Posterior vena cava (tissue), 2 donors: ENCODE measurements at regions of chr12 and their contacts with region 1.

Region 1: GRCh38 chr12:67710582-67710981 is 62.0 kb downstream of the DYRK2 start:
- DNase-seq: no peak

Region 2: GRCh38 chr12:66636771-66637170 is 1073.8 kb before region 1 on chr12:
- intact Hi-C with region 1: no loop called
- DNase-seq: peak; percentile 81

Region 3: DNA sequence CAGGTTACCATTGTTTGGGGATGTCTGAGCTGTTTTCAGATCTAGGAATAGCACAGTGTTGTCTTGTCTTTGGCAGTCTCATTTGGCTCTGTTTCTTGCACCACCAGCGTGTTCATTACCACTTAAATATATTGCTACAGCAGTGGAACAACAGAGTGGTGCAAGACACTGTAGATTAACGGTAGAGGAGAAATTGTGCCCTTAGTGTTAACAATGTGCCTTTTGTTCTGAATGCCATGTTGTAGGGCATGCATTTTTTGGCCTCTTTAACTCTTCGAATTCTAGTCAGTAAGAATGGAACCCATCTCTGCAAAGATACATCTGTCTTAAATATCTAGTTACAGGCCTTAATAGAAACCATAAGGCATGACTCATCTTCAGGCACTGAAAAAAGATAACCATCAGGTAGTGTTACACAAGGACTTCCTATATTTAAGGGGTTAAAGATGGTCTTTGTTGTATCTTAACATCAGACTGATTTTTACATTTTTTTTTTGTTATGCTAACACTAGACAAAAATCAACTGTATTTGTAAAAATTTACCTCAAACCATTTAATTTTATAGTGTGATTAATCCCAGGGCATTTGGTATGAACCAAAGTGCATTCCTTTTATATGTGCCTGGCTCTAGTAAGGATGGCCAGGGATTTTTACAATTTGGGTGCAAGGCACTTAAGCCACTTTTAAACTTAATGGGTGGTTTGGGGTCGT is 49.1 kb before region 1 on chr12:
- intact Hi-C with region 1: loop called in 1 of 2 experiments (anchors 10 kb)
- DNase-seq: no peak

Region 4: GRCh38 chr12:67742461-67742860 is 31.9 kb after region 1 on chr12:
- intact Hi-C with region 1: no loop called
- DNase-seq: no peak